Natural killer cell (primary cell): ENCODE measurements at regions of chr1 and their contacts with region 1.

Region 1: DNA sequence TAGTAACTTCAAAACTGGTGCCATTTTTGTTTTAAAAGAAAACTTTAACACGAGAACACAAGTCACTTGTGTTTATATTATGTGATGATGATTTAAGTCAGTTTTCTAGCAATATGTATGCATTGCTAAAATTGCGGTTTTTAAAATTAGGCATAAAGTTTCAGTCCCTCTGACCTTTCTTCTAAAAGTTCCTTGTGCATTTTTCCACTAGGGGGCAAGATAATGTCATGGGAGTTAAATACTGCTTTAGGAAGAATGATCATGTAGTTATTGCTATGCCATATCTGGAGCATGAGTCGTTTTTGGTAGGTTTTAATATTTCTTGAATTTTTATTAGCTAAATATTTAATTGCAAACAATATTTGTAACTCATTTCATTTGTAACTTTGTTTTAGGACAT is 10.7 kb downstream of the CDC7 start:
- DNase-seq: peak in 1 of 2 donors; percentile 70
- ATAC-seq: peak in 2 of 3 donors; percentile 49 to 72
- H3K4me3 ChIP-seq: no peak overlapping the region
- H3K4me3 Mint-ChIP-seq: no peak overlapping the region
- H3K27ac ChIP-seq: no peak overlapping the region
- H3K27ac Mint-ChIP-seq: no peak overlapping the region
- H3K4me1 ChIP-seq: no peaks in the 10 kb centered on the region
- H3K4me1 Mint-ChIP-seq: peaks cover 11 to 24% of the 10 kb centered on the region in 2 donors
- H3K27me3 ChIP-seq: no peaks in the 10 kb centered on the region
- H3K27me3 Mint-ChIP-seq: no peaks in the 10 kb centered on the region
- CTCF ChIP-seq: peak; percentile 70

Region 2: GRCh38 chr1:91546876-91547275 is 35.5 kb after region 1 on chr1:
- intact Hi-C with region 1: loop called (anchors 5 kb)
- DNase-seq: no peak
- ATAC-seq: peak in 1 of 3 donors; percentile 9
- H3K4me3 ChIP-seq: no peak overlapping the region
- H3K4me3 Mint-ChIP-seq: peak overlapping the region; percentile 86
- H3K27ac ChIP-seq: peak overlapping the region; percentile 86
- H3K27ac Mint-ChIP-seq: peak overlapping the region; percentile 83 to 99
- H3K4me1 ChIP-seq: peaks cover 75% of the 10 kb centered on the region
- H3K4me1 Mint-ChIP-seq: peaks cover 94 to 95% of the 10 kb centered on the region in 2 donors
- H3K27me3 ChIP-seq: no peaks in the 10 kb centered on the region
- H3K27me3 Mint-ChIP-seq: no peaks in the 10 kb centered on the region
- CTCF ChIP-seq: no peak

Region 3: GRCh38 chr1:91712981-91713841 is 201.8 kb after region 1 on chr1:
- intact Hi-C with region 1: loop called (anchors 5 kb)
- DNase-seq: peak; percentile 57 to 73
- ATAC-seq: peak; percentile 87 to 93 (median 92)
- H3K4me3 ChIP-seq: no peak overlapping the region
- H3K4me3 Mint-ChIP-seq: peak overlapping the region; percentile 82
- H3K27ac ChIP-seq: peak overlapping the region; percentile 70
- H3K27ac Mint-ChIP-seq: peak overlapping the region; percentile 94 to 99
- H3K4me1 ChIP-seq: peaks cover 35% of the 10 kb centered on the region
- H3K4me1 Mint-ChIP-seq: peaks cover 70 to 76% of the 10 kb centered on the region in 2 donors
- H3K27me3 ChIP-seq: no peaks in the 10 kb centered on the region
- H3K27me3 Mint-ChIP-seq: no peaks in the 10 kb centered on the region
- CTCF ChIP-seq: no peak

Region 4: GRCh38 chr1:91803847-91804545 is 292.6 kb after region 1 on chr1:
- intact Hi-C with region 1: loop called (anchors 5 kb)
- DNase-seq: peak; percentile 56 to 95
- ATAC-seq: peak; percentile 58 to 79 (median 69)
- H3K4me3 ChIP-seq: peak overlapping the region; percentile 8
- H3K4me3 Mint-ChIP-seq: peak overlapping the region; percentile 78
- H3K27ac ChIP-seq: peak overlapping the region; percentile 97
- H3K27ac Mint-ChIP-seq: peak overlapping the region; percentile 95 to 96
- H3K4me1 ChIP-seq: peaks cover 63% of the 10 kb centered on the region
- H3K4me1 Mint-ChIP-seq: peaks cover 89 to 92% of the 10 kb centered on the region in 2 donors
- H3K27me3 ChIP-seq: no peaks in the 10 kb centered on the region
- H3K27me3 Mint-ChIP-seq: no peaks in the 10 kb centered on the region
- CTCF ChIP-seq: no peak

Region 5: DNA sequence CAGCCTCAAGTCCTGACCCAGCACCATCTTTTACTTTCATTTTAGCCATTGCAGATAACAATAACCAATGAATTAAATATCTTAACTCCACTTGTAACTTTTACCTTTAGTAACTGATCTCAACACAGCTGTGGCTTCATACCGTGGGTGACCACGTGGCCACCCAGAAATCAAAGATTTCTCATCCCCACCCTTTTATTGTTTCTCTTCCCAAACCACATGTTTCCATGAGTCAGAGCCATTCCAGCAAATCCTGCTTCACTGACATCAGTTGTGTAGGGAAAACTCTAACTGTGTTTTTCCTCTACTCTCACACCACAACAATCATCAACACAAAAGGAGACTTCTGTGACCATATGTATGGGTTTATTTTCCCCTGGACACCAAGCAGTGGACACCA is 412.8 kb after region 1 on chr1:
- intact Hi-C with region 1: loop called (anchors 1 kb)
- DNase-seq: no peak
- ATAC-seq: no peak
- H3K4me3 ChIP-seq: no peak overlapping the region
- H3K4me3 Mint-ChIP-seq: peak overlapping the region; percentile 7
- H3K27ac ChIP-seq: no peak overlapping the region
- H3K27ac Mint-ChIP-seq: peak overlapping the region; percentile 0 to 51
- H3K4me1 ChIP-seq: peaks cover 9% of the 10 kb centered on the region
- H3K4me1 Mint-ChIP-seq: peaks cover 9% of the 10 kb centered on the region in 2 donors
- H3K27me3 ChIP-seq: no peaks in the 10 kb centered on the region
- H3K27me3 Mint-ChIP-seq: no peaks in the 10 kb centered on the region
- CTCF ChIP-seq: no peak